Lower leg skin (tissue), 4 donors: ENCODE measurements at regions of chr2 and their contacts with region 1.

Region 1: DNA sequence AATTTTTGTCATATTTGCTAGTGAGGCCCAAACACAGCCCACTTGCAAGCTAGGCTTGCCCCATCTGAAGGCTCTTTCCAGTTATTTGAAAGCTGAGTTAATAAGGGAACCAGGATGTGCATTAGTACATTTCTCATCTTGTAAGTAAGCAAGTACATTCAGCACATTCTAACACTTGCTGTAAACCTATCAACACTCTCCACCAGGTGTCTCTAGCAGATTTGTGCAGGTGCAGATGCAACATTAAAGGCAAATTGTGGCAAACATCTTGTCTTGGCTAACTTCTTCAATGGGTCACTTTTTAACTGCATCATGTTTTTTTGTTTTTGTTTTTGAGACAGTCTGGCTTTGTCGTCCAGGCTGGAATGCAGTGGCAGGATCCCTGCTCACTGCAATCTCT is 25.3 kb upstream of the MFSD6 start:
- DNase-seq: no peak
- H3K4me3 ChIP-seq: no peak overlapping the region
- CTCF ChIP-seq: no peak
- POLR2A ChIP-seq: no peak

Region 2: GRCh38 chr2:190511104-190511503 is 128.3 kb after region 1 on chr2:
- intact Hi-C with region 1: loop called (anchors 10 kb)
- DNase-seq: no peak
- H3K4me3 ChIP-seq: no peak overlapping the region
- CTCF ChIP-seq: no peak
- POLR2A ChIP-seq: no peak